ENCODE measurements at regions of chr10 and their contacts with region 1.

Region 1: GRCh38 chr10:75099952-75100763 is 11.3 kb upstream of the SAMD8 start:
- DNase-seq: peak; percentile 76 to 89
- H3K4me3 ChIP-seq: no peak overlapping the region
- H3K4me3 Mint-ChIP-seq: no peak overlapping the region
- H3K27ac Mint-ChIP-seq: no peak overlapping the region
- H3K4me1 ChIP-seq: peaks cover 5% of the 10 kb centered on the region; the same call in 1 of the 2 replicates
- H3K4me1 Mint-ChIP-seq: peaks cover 8% of the 10 kb centered on the region
- H3K27me3 ChIP-seq: no peaks in the 10 kb centered on the region
- H3K27me3 Mint-ChIP-seq: no peaks in the 10 kb centered on the region
- CTCF ChIP-seq: peak; percentile 95 to 97

Region 2: GRCh38 chr10:74244097-74244685 is 856.0 kb before region 1 on chr10:
- CTCF ChIA-PET with region 1: no interaction called
- POLR2A ChIA-PET with region 1: no interaction called
- intact Hi-C with region 1: loop called (anchors 10 kb)
- DNase-seq: peak in 1 of 2 experiments; percentile 25
- H3K4me3 ChIP-seq: no peak overlapping the region
- H3K4me3 Mint-ChIP-seq: no peak overlapping the region
- H3K27ac Mint-ChIP-seq: no peak overlapping the region
- H3K4me1 ChIP-seq: no peaks in the 10 kb centered on the region
- H3K4me1 Mint-ChIP-seq: peaks cover 7% of the 10 kb centered on the region
- H3K27me3 ChIP-seq: no peaks in the 10 kb centered on the region
- H3K27me3 Mint-ChIP-seq: no peaks in the 10 kb centered on the region
- CTCF ChIP-seq: peak; percentile 42 to 49

Region 3: DNA sequence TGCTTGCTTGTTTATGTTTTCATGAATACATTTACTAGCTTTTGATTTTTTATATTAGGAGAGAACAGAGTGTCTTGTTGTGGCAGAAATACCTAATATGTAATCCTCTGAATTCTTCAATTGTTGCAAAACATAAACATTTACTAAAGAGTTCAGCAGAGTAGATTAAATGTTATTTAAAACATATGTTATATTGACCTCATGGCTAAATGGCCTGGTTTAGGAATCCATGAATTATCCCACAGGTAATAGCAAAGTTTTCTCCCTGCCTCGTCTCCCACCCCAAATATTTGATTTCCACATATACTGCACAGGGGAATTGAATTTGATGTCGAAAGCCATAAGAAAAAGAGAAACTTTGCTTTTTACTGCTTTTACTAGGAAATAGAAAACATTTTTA is 837.3 kb before region 1 on chr10:
- CTCF ChIA-PET with region 1: no interaction called
- POLR2A ChIA-PET with region 1: no interaction called
- intact Hi-C with region 1: loop called (anchors 1 kb)
- DNase-seq: no peak
- H3K4me3 ChIP-seq: no peak overlapping the region
- H3K4me3 Mint-ChIP-seq: no peak overlapping the region
- H3K27ac Mint-ChIP-seq: no peak overlapping the region
- H3K4me1 ChIP-seq: no peaks in the 10 kb centered on the region
- H3K4me1 Mint-ChIP-seq: no peaks in the 10 kb centered on the region
- H3K27me3 ChIP-seq: no peaks in the 10 kb centered on the region
- H3K27me3 Mint-ChIP-seq: no peaks in the 10 kb centered on the region
- CTCF ChIP-seq: no peak

Measured in Caco-2 (cell line).